ENCODE measurements at regions of chr2 and their contacts with region 1.

Region 1: GRCh38 chr2:101823347-101823791 is 125.9 kb downstream of the MAP4K4 start:
- DNase-seq: no peak
- H3K4me3 ChIP-seq: no peak overlapping the region
- H3K27ac ChIP-seq: peak overlapping the region; percentile 33
- H3K4me1 ChIP-seq: peaks cover 88% of the 10 kb centered on the region
- H3K27me3 ChIP-seq: no peaks in the 10 kb centered on the region
- CTCF ChIP-seq: peak; percentile 78

Region 2: DNA sequence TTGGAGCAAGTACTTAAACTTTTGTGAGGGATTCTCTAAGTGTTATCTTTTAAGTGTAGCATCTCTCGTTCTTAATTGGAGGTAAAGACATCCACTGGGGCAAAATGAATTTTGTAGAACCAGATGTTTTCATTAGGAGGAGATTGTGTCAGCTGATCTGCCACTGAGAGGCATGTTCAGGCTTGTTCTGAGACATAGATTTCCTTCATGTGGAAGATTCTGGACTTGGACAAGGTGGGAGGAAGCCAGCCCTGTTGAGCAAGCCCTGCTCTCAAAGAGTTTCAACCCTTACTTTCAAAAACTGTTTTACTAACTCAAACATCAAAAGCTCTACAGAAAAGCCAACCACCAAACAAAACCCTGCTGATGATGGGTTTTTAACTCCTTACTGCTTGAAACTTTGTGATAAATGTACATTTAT is 119.3 kb before region 1 on chr2:
- intact Hi-C with region 1: loop called (anchors 5 kb)
- DNase-seq: no peak
- H3K4me3 ChIP-seq: no peak overlapping the region
- H3K27ac ChIP-seq: peak overlapping the region; percentile 56
- H3K4me1 ChIP-seq: peaks cover 97% of the 10 kb centered on the region
- H3K27me3 ChIP-seq: no peaks in the 10 kb centered on the region
- CTCF ChIP-seq: no peak

Region 3: DNA sequence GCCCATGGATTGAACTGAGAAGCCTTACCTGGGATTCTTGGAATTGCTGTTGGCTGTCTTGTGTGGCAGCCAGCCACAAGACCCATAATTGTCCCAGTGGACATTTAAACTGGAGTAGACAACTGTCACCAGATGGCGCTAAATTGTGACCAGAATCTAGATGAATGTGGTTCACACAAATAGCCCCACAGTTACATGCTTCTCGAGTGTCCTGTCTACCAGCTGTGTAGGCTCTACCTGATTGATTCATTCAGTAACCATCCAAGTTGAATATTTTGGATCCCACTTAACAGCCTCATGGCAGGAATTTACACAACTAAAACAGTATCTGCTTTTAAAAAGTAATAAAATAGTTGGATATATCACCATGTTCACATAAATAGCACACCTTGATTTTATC is 52.6 kb before region 1 on chr2:
- intact Hi-C with region 1: loop called (anchors 10 kb)
- DNase-seq: no peak
- H3K4me3 ChIP-seq: no peak overlapping the region
- H3K27ac ChIP-seq: peak overlapping the region; percentile 41
- H3K4me1 ChIP-seq: peaks cover 99% of the 10 kb centered on the region
- H3K27me3 ChIP-seq: no peaks in the 10 kb centered on the region
- CTCF ChIP-seq: peak; percentile 50